ENCODE measurements at regions of chr12 and their contacts with region 1.

Region 1: GRCh38 chr12:62603061-62603810 is 136.6 kb downstream of the MON2 start:
- DNase-seq: peak; percentile 92
- ATAC-seq: peak; percentile 67
- H3K4me3 ChIP-seq: peak overlapping the region; percentile 81 to 89 (median 82)
- H3K4me3 Mint-ChIP-seq: peak overlapping the region; percentile 94
- H3K27ac ChIP-seq: peak overlapping the region; percentile 99 to 100
- H3K27ac Mint-ChIP-seq: peak overlapping the region; percentile 100
- H3K4me1 ChIP-seq: peaks cover 17 to 22% of the 10 kb centered on the region in 2 donors
- H3K4me1 Mint-ChIP-seq: peaks cover 40% of the 10 kb centered on the region
- H3K27me3 ChIP-seq: no peaks in the 10 kb centered on the region
- H3K27me3 Mint-ChIP-seq: no peaks in the 10 kb centered on the region
- CTCF ChIP-seq: peak; percentile 49

Region 2: GRCh38 chr12:62123721-62124203 is 479.5 kb before region 1 on chr12:
- CTCF ChIA-PET with region 1: no interaction called
- POLR2A ChIA-PET with region 1: no interaction called
- intact Hi-C with region 1: no loop called
- DNase-seq: peak; percentile 23
- ATAC-seq: no peak
- H3K4me3 ChIP-seq: no peak overlapping the region
- H3K4me3 Mint-ChIP-seq: no peak overlapping the region
- H3K27ac ChIP-seq: no peak overlapping the region
- H3K27ac Mint-ChIP-seq: no peak overlapping the region
- H3K4me1 ChIP-seq: no peaks in the 10 kb centered on the region
- H3K4me1 Mint-ChIP-seq: no peaks in the 10 kb centered on the region
- H3K27me3 ChIP-seq: no peaks in the 10 kb centered on the region
- H3K27me3 Mint-ChIP-seq: peaks cover 8% of the 10 kb centered on the region
- CTCF ChIP-seq: peak; percentile 64

Region 3: GRCh38 chr12:62466594-62467491 is 136.4 kb before region 1 on chr12 and contains the start of gene MON2:
- CTCF ChIA-PET with region 1: interaction called, 3 read pairs
- POLR2A ChIA-PET with region 1: interaction called, 14 read pairs
- intact Hi-C with region 1: loop called (anchors 1 kb)
- DNase-seq: peak; percentile 90
- ATAC-seq: peak; percentile 97
- H3K4me3 ChIP-seq: peak within 1 kb of the TSS; percentile 70 to 95 (median 91)
- H3K4me3 Mint-ChIP-seq: peak within 1 kb of the TSS; percentile 97
- H3K27ac ChIP-seq: peak within 1 kb of the TSS; percentile 91 to 93
- H3K27ac Mint-ChIP-seq: peak within 1 kb of the TSS; percentile 86
- H3K4me1 ChIP-seq: peaks cover 23 to 25% of the 10 kb centered on the region in 2 donors
- H3K4me1 Mint-ChIP-seq: peaks cover 27% of the 10 kb centered on the region
- H3K27me3 ChIP-seq: no peaks in the 10 kb centered on the region
- H3K27me3 Mint-ChIP-seq: no peaks in the 10 kb centered on the region
- CTCF ChIP-seq: no peak
- total RNA-seq, gene MON2: 104 and 118 TPM in 2 replicates

Region 4: GRCh38 chr12:62631471-62632410 is 28.5 kb after region 1 on chr12:
- CTCF ChIA-PET with region 1: interaction called, 4 read pairs
- POLR2A ChIA-PET with region 1: no interaction called
- intact Hi-C with region 1: loop called (anchors 2 kb)
- DNase-seq: peak; percentile 57
- ATAC-seq: peak; percentile 63
- H3K4me3 ChIP-seq: peak overlapping the region; percentile 36 to 60 (median 53)
- H3K4me3 Mint-ChIP-seq: peak overlapping the region; percentile 89
- H3K27ac ChIP-seq: no peak overlapping the region
- H3K27ac Mint-ChIP-seq: no peak overlapping the region
- H3K4me1 ChIP-seq: peaks cover 18 to 19% of the 10 kb centered on the region in 2 donors
- H3K4me1 Mint-ChIP-seq: peaks cover 14% of the 10 kb centered on the region
- H3K27me3 ChIP-seq: peaks cover 0 to 43% (median 39%) of the 10 kb centered on the region in 4 experiments
- H3K27me3 Mint-ChIP-seq: peaks cover 83% of the 10 kb centered on the region
- CTCF ChIP-seq: no peak

Region 5: DNA sequence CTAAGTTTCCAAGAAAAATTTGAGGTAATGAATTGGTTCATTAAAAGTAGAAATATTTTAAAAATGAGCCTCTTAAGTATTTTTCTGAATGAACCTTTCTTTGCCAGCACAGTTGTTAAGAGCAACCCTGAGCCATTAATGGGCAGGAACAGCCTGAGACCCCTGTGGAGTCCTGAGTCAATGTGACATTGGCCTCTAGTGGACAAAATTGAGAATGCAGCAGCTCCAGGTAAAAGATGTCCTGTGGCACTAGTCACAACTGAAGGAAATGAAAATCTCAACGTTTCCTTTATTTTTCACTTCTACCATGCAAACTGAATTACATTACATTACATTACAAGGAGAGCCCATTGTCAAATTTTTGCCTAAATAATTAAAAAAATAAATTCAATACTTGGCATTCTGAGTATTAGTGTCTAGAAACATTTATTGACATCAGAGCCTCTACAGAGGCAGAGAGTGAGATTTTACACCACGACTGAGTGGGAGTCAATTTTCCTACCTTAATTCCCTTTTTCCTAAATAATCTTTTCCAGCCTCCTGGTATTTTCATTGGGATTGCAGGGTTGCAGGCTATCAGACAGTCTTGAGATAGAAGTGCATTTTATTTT is 196.0 kb after region 1 on chr12:
- CTCF ChIA-PET with region 1: interaction called, 22 read pairs
- POLR2A ChIA-PET with region 1: interaction called, 3 read pairs
- intact Hi-C with region 1: no loop called
- DNase-seq: peak; percentile 68
- ATAC-seq: peak; percentile 80
- H3K4me3 ChIP-seq: no peak overlapping the region
- H3K4me3 Mint-ChIP-seq: no peak overlapping the region
- H3K27ac ChIP-seq: no peak overlapping the region
- H3K27ac Mint-ChIP-seq: no peak overlapping the region
- H3K4me1 ChIP-seq: no peaks in the 10 kb centered on the region
- H3K4me1 Mint-ChIP-seq: no peaks in the 10 kb centered on the region
- H3K27me3 ChIP-seq: no peaks in the 10 kb centered on the region
- H3K27me3 Mint-ChIP-seq: no peaks in the 10 kb centered on the region
- CTCF ChIP-seq: peak; percentile 98

Region 6: GRCh38 chr12:64222009-64222765 is 1619.0 kb after region 1 on chr12 and contains the start of gene KICS2:
- CTCF ChIA-PET with region 1: no interaction called
- POLR2A ChIA-PET with region 1: no interaction called
- intact Hi-C with region 1: loop called (anchors 2 kb)
- DNase-seq: peak; percentile 98
- ATAC-seq: peak; percentile 86
- H3K4me3 ChIP-seq: peak within 1 kb of the TSS; percentile 58 to 89 (median 80)
- H3K4me3 Mint-ChIP-seq: peak within 1 kb of the TSS; percentile 93
- H3K27ac ChIP-seq: peak within 1 kb of the TSS; percentile 92 to 97
- H3K27ac Mint-ChIP-seq: peak within 1 kb of the TSS; percentile 96
- H3K4me1 ChIP-seq: peaks cover 10 to 20% of the 10 kb centered on the region in 2 donors
- H3K4me1 Mint-ChIP-seq: peaks cover 31% of the 10 kb centered on the region
- H3K27me3 ChIP-seq: peaks cover 0 to 3% (median 0%) of the 10 kb centered on the region in 4 experiments
- H3K27me3 Mint-ChIP-seq: peaks cover 8% of the 10 kb centered on the region
- CTCF ChIP-seq: no peak
- total RNA-seq, gene KICS2: 18.7 and 21.2 TPM in 2 replicates

Region 7: DNA sequence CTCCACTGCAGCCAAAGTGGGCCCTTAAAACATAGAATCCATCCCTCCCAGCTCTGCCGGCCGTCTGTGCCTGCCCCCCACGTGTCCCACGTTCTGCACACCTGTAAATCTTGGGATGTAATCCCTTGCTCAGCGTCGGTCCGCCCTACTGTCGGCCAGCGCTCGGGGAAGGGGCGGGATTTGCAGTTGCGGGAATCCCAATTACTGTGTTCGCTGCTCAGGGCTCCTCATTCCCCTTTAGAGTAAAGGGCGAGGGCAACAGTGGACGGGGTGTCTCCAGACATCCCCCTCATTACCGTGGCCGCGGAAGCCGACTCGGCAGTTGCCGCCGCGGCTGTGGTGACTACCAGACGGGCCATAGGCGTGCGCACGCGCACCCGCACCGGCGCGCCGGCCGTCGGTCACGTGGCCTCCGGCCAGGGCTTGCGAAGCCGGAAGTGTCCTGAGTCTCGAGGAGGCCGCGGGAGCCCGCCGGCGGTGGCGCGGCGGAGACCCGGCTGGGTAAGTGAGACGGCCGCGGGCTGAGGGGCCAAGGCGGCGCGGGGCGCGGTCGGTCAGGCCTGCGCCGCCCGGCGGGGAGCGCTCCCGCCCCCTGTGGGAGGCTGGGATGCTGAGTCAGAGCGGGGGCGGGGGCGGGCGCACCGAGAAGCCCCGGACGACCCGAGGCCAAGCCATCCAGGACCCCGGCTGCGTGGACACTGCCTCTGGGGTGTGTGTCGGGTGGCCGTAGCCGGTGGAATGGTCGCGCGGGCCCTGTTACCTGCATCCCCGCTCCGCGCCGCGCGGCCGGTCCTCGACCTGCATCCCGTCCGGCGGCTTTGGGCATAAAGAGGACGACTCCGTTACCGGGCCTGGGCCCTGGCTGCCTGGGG is 1848.7 kb after region 1 on chr12 and contains the start of gene TBK1:
- CTCF ChIA-PET with region 1: no interaction called
- POLR2A ChIA-PET with region 1: no interaction called
- intact Hi-C with region 1: loop called (anchors 5 kb)
- DNase-seq: peak; percentile 82
- ATAC-seq: peak; percentile 79
- H3K4me3 ChIP-seq: peak within 1 kb of the TSS; percentile 66 to 97 (median 90)
- H3K4me3 Mint-ChIP-seq: peak within 1 kb of the TSS; percentile 96
- H3K27ac ChIP-seq: peak within 1 kb of the TSS; percentile 63 to 77
- H3K27ac Mint-ChIP-seq: peak within 1 kb of the TSS; percentile 92
- H3K4me1 ChIP-seq: peaks cover 5 to 12% of the 10 kb centered on the region in 2 donors
- H3K4me1 Mint-ChIP-seq: peaks cover 38% of the 10 kb centered on the region
- H3K27me3 ChIP-seq: no peaks in the 10 kb centered on the region
- H3K27me3 Mint-ChIP-seq: no peaks in the 10 kb centered on the region
- CTCF ChIP-seq: peak; percentile 38
- total RNA-seq, gene TBK1: 38.5 and 46.9 TPM in 2 replicates